Esophagus squamous epithelium (tissue), 5 donors: ENCODE measurements at regions of chr19 and their contacts with region 1.

Region 1: GRCh38 chr19:58166708-58167280 is 16.1 kb upstream of the ZNF274 start:
- DNase-seq: no peak
- H3K4me3 ChIP-seq: no peak overlapping the region
- H3K27ac ChIP-seq: no peak overlapping the region
- H3K4me1 ChIP-seq: no peaks in the 10 kb centered on the region
- H3K27me3 ChIP-seq: no peaks in the 10 kb centered on the region
- CTCF ChIP-seq: no peak
- POLR2A ChIP-seq: no peak

Region 2: GRCh38 chr19:58009666-58010371 is 157.0 kb before region 1 on chr19:
- intact Hi-C with region 1: loop called (anchors 10 kb)
- DNase-seq: no peak
- H3K4me3 ChIP-seq: peak overlapping the region; percentile 7 to 67 (median 44)
- H3K27ac ChIP-seq: peak overlapping the region; percentile 24 to 90 (median 64)
- H3K4me1 ChIP-seq: peaks cover 0 to 26% (median 9%) of the 10 kb centered on the region in 3 donors
- H3K27me3 ChIP-seq: no peaks in the 10 kb centered on the region
- CTCF ChIP-seq: peak in 2 of 6 experiments; percentile 6 to 26
- POLR2A ChIP-seq: no peak

Region 3: DNA sequence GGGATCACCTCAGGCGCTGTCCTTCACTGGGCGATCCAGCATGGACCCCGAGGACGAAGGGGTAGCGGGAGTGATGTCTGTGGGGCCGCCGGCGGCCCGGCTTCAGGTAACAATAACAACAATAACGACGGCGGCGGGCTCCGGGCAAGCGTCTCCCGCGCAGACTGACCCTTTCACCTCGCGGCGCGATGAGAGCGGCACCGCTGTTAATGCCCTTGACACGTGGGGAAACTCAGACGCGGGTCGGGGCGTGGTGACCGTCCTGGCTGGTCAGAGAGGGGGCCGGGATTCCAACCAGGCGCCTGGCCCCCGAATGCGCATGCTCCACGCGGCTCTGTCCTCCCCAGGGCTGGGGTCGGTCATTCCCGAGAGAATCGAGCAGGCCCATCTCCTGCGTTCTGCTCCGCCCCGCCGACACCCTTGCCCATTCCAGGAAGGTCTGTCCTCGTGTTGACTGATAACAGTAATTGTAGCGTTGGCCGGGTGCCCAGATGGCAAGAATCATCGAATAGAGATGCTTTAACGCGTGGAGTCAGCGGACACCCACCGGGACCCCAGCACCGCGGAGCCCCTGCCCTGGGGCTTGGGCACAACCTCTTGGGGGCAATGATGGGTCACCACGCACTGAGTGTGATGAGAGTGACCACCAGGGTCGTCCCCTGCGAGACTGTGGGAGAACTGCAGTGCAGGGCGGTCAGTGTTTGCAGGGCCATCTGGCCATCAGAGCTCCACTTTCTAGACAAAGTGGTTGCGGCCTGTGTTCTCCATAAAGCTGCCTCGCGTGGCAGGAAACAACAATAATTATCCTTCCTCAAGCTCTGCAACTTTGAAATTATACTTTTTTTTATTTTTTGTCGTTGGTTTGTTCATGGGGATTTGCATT is 112.5 kb after region 1 on chr19:
- intact Hi-C with region 1: no loop called
- DNase-seq: peak; percentile 23
- H3K4me3 ChIP-seq: peak overlapping the region; percentile 85 to 95 (median 89)
- H3K27ac ChIP-seq: peak overlapping the region; percentile 86 to 95 (median 90)
- H3K4me1 ChIP-seq: peaks cover 6 to 39% (median 9%) of the 10 kb centered on the region in 3 donors
- H3K27me3 ChIP-seq: no peaks in the 10 kb centered on the region
- CTCF ChIP-seq: no peak
- POLR2A ChIP-seq: no peak